CD4-positive, alpha-beta T cell (primary cell): ENCODE measurements at regions of chr11 and their contacts with region 1.

Region 1: GRCh38 chr11:61967116-61967923 is at the start of gene FTH1:
- DNase-seq: peak; percentile 83 to 96 (median 91)
- ATAC-seq: peak; percentile 71
- H3K4me3 ChIP-seq: peak within 1 kb of the TSS; percentile 98
- H3K4me3 Mint-ChIP-seq: peak within 1 kb of the TSS; percentile 99
- H3K27ac ChIP-seq: peak within 1 kb of the TSS; percentile 87 to 94
- H3K27ac Mint-ChIP-seq: peak within 1 kb of the TSS; percentile 84
- H3K4me1 ChIP-seq: peaks cover 61% of the 10 kb centered on the region
- H3K4me1 Mint-ChIP-seq: peaks cover 74% of the 10 kb centered on the region
- H3K27me3 ChIP-seq: no peaks in the 10 kb centered on the region
- H3K27me3 Mint-ChIP-seq: peaks cover 4% of the 10 kb centered on the region
- CTCF ChIP-seq: no peak
- total RNA-seq, gene FTH1: 2,313 to 2,400 TPM

Region 2: GRCh38 chr11:60906132-60906972 is 1061.0 kb before region 1 on chr11 and contains the start of gene PRPF19:
- CTCF ChIA-PET with region 1: no interaction called
- POLR2A ChIA-PET with region 1: no interaction called
- intact Hi-C with region 1: loop called in 1 of 2 experiments (anchors 5 kb)
- DNase-seq: peak; percentile 97 to 100 (median 99)
- ATAC-seq: peak; percentile 93
- H3K4me3 ChIP-seq: peak within 1 kb of the TSS; percentile 66
- H3K4me3 Mint-ChIP-seq: peak within 1 kb of the TSS; percentile 93
- H3K27ac ChIP-seq: peak within 1 kb of the TSS; percentile 85 to 93
- H3K27ac Mint-ChIP-seq: peak within 1 kb of the TSS; percentile 96
- H3K4me1 ChIP-seq: peaks cover 42% of the 10 kb centered on the region
- H3K4me1 Mint-ChIP-seq: peaks cover 56% of the 10 kb centered on the region
- H3K27me3 ChIP-seq: no peaks in the 10 kb centered on the region
- H3K27me3 Mint-ChIP-seq: no peaks in the 10 kb centered on the region
- CTCF ChIP-seq: no peak
- total RNA-seq, gene PRPF19: 63.2 to 67.3 TPM

Region 3: DNA sequence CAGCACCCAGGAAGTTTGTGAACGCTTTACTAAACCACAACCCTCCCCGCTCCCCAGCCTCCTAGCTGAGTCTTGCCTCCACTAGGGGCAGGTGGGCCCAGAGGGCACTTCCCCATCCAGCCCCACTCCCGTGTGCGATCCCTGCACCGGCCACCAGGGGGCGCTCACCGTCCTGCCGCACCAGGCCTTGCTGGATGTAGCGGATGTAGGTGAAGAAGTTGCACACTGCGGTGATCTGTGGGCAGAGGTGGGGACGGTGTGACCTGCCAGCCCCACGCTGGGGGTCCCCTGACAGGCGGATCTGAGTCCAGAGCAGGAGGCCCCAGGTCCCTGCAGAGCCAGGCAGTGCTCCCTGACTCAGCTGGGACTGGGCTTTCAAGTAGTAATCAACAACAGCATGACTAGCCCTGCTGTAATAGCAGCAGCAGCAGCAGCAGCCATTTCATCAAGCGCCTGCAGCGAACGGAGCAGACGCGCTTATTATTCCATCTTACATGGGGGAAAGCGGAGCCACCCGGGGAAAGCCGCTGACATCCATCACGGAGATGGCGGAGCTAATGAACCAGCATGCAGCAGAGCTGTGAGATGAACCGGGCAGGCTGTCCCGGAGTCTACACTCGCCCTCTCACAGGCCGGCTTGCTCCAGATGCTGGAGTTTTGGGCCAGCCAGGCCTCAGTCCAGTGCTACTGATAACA is 68.0 kb before region 1 on chr11:
- CTCF ChIA-PET with region 1: interaction called, 11 read pairs
- POLR2A ChIA-PET with region 1: interaction called, 5 read pairs
- intact Hi-C with region 1: loop called (anchors 5 kb)
- DNase-seq: peak; percentile 87 to 97 (median 93)
- ATAC-seq: peak; percentile 98
- H3K4me3 ChIP-seq: no peak overlapping the region
- H3K4me3 Mint-ChIP-seq: no peak overlapping the region
- H3K27ac ChIP-seq: no peak overlapping the region
- H3K27ac Mint-ChIP-seq: no peak overlapping the region
- H3K4me1 ChIP-seq: peaks cover 9% of the 10 kb centered on the region
- H3K4me1 Mint-ChIP-seq: peaks cover 6% of the 10 kb centered on the region
- H3K27me3 ChIP-seq: no peaks in the 10 kb centered on the region
- H3K27me3 Mint-ChIP-seq: no peaks in the 10 kb centered on the region
- CTCF ChIP-seq: peak; percentile 98

Region 4: DNA sequence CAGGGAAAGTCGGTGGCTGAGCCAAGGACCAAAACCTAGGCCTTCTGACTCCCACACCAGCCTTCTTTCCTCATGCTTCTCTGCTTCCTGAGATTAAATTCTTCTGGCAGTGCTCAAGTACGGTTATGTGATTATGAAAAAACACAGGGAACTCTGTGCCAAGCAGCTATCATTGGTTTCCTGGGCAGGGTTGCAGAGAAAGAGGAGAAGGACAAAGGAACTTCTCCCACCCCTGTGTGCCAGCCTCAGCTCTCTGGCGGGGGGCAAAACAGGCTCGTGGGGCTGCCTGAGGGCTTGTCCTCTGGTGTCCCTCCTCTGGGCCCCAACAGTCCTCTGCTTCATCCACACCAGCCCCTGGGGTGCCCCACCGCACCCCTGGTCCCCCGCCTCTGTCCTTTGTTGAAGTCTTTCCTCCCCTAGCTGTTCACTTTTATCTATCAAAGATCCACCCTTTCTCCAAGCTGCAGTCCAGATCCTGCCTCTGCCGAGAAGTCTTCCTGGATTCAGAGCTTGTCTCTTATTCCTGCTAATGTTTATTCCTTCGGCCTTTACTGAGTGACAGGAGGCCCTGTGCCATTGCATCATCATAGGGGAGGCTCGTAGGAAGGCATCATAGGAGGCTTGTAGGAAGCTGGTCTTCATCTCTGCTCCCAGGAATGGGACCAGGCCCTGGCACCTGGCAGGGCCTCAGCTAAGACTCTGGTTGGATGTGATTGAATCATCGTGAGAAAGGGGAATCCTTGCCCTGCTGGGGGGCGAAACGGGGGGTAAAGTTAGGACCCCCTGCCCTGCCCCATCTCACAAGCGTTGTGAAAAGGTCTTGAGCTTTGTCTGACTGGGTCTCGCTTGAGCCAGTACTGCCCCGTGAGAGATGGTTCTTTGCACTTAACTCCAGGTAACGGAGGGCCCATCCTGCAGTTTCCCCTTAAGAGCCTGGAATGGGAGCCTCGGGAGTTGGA is 11.7 kb after region 1 on chr11:
- CTCF ChIA-PET with region 1: interaction called, 4 read pairs
- POLR2A ChIA-PET with region 1: interaction called, 33 read pairs
- intact Hi-C with region 1: no loop called
- DNase-seq: no peak
- ATAC-seq: no peak
- H3K4me3 ChIP-seq: no peak overlapping the region
- H3K4me3 Mint-ChIP-seq: no peak overlapping the region
- H3K27ac ChIP-seq: no peak overlapping the region
- H3K27ac Mint-ChIP-seq: no peak overlapping the region
- H3K4me1 ChIP-seq: no peaks in the 10 kb centered on the region
- H3K4me1 Mint-ChIP-seq: peaks cover 4% of the 10 kb centered on the region
- H3K27me3 ChIP-seq: no peaks in the 10 kb centered on the region
- H3K27me3 Mint-ChIP-seq: no peaks in the 10 kb centered on the region
- CTCF ChIP-seq: no peak

Region 5: DNA sequence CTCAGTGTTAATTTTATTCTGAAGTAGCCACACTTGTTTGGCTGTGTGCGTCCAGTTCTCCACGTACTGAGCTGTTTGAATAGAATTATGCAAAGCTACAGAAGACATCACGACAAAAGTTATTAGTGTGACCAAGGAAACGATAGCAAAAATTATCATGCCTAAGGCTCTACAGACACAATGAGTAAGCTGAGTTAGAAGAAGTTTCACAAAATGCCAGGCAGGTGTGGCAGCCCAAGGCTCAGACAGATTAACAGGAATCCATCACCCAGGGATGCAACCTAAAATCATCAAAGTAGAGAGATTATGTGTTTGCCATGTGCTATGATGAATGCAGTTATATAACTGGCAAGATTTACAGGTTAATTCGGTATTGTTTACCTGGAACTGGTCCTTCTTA is 83.4 kb after region 1 on chr11:
- CTCF ChIA-PET with region 1: no interaction called
- POLR2A ChIA-PET with region 1: interaction called, 14 read pairs
- intact Hi-C with region 1: no loop called
- DNase-seq: no peak
- ATAC-seq: no peak
- H3K4me3 ChIP-seq: no peak overlapping the region
- H3K4me3 Mint-ChIP-seq: no peak overlapping the region
- H3K27ac ChIP-seq: no peak overlapping the region
- H3K27ac Mint-ChIP-seq: no peak overlapping the region
- H3K4me1 ChIP-seq: no peaks in the 10 kb centered on the region
- H3K4me1 Mint-ChIP-seq: no peaks in the 10 kb centered on the region
- H3K27me3 ChIP-seq: no peaks in the 10 kb centered on the region
- H3K27me3 Mint-ChIP-seq: peaks cover 7% of the 10 kb centered on the region
- CTCF ChIP-seq: no peak

Region 6: GRCh38 chr11:62123669-62124185 is 156.4 kb after region 1 on chr11 and contains the start of gene INCENP:
- CTCF ChIA-PET with region 1: no interaction called
- POLR2A ChIA-PET with region 1: interaction called, 11 read pairs
- intact Hi-C with region 1: no loop called
- DNase-seq: peak; percentile 87 to 98 (median 92)
- ATAC-seq: peak; percentile 99
- H3K4me3 ChIP-seq: peak within 1 kb of the TSS; percentile 87
- H3K4me3 Mint-ChIP-seq: peak within 1 kb of the TSS; percentile 97
- H3K27ac ChIP-seq: no peak within 1 kb of the TSS
- H3K27ac Mint-ChIP-seq: peak within 1 kb of the TSS; percentile 89
- H3K4me1 ChIP-seq: peaks cover 17% of the 10 kb centered on the region
- H3K4me1 Mint-ChIP-seq: peaks cover 30% of the 10 kb centered on the region
- H3K27me3 ChIP-seq: no peaks in the 10 kb centered on the region
- H3K27me3 Mint-ChIP-seq: no peaks in the 10 kb centered on the region
- CTCF ChIP-seq: no peak
- total RNA-seq, gene INCENP: 12.6 to 16.3 TPM

Region 7: GRCh38 chr11:62449451-62449851 is 482.1 kb after region 1 on chr11:
- CTCF ChIA-PET with region 1: no interaction called
- POLR2A ChIA-PET with region 1: no interaction called
- intact Hi-C with region 1: no loop called
- DNase-seq: no peak
- ATAC-seq: no peak
- H3K4me3 ChIP-seq: no peak overlapping the region
- H3K4me3 Mint-ChIP-seq: no peak overlapping the region
- H3K27ac ChIP-seq: no peak overlapping the region
- H3K27ac Mint-ChIP-seq: no peak overlapping the region
- H3K4me1 ChIP-seq: peaks cover 6% of the 10 kb centered on the region
- H3K4me1 Mint-ChIP-seq: peaks cover 6% of the 10 kb centered on the region
- H3K27me3 ChIP-seq: peaks cover 0 to 3% of the 10 kb centered on the region in 2 experiments
- H3K27me3 Mint-ChIP-seq: peaks cover 34% of the 10 kb centered on the region
- CTCF ChIP-seq: no peak

Region 8: DNA sequence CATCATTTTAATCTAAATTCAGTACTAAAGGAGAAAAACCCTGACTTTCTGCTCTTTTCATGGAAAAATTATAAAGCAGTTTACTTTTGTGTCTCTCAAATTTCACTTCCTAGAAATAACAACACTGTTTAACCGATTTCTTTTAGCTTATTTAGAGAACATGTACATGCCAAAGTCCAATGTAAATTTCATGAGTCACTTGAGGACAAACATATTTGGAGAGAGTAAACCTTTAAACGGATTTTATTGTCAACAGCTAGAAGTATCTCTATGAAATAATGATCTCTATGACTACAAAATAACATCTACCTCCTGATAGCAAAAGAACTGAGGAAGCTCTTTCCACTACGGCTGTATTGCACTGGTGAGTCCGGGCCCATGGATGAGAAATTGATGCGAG is 1322.3 kb after region 1 on chr11:
- CTCF ChIA-PET with region 1: no interaction called
- POLR2A ChIA-PET with region 1: no interaction called
- intact Hi-C with region 1: no loop called
- DNase-seq: no peak
- ATAC-seq: no peak
- H3K4me3 ChIP-seq: no peak overlapping the region
- H3K4me3 Mint-ChIP-seq: no peak overlapping the region
- H3K27ac ChIP-seq: no peak overlapping the region
- H3K27ac Mint-ChIP-seq: no peak overlapping the region
- H3K4me1 ChIP-seq: no peaks in the 10 kb centered on the region
- H3K4me1 Mint-ChIP-seq: no peaks in the 10 kb centered on the region
- H3K27me3 ChIP-seq: no peaks in the 10 kb centered on the region
- H3K27me3 Mint-ChIP-seq: peaks cover 40% of the 10 kb centered on the region
- CTCF ChIP-seq: no peak